ENCODE measurements at regions of chr5 and their contacts with region 1.

Region 1: GRCh38 chr5:96614110-96614691 is 48.0 kb upstream of the CAST start:
- DNase-seq: peak; percentile 74
- H3K4me3 ChIP-seq: no peak overlapping the region; the same call in 1 of the 2 replicates
- CTCF ChIP-seq: peak; percentile 24

Region 2: GRCh38 chr5:96344678-96345577 is 269.3 kb before region 1 on chr5:
- CTCF ChIA-PET with region 1: interaction called, 55 read pairs
- POLR2A ChIA-PET with region 1: no interaction called
- DNase-seq: peak; percentile 51
- H3K4me3 ChIP-seq: no peak overlapping the region
- CTCF ChIP-seq: peak; percentile 51

Region 3: GRCh38 chr5:96626956-96627355 is 12.8 kb after region 1 on chr5:
- CTCF ChIA-PET with region 1: interaction called, 20 read pairs
- POLR2A ChIA-PET with region 1: interaction called, 3 read pairs
- DNase-seq: peak; percentile 74
- H3K4me3 ChIP-seq: no peak overlapping the region
- CTCF ChIP-seq: no peak

Region 4: GRCh38 chr5:96702503-96703383 is 88.5 kb after region 1 on chr5:
- CTCF ChIA-PET with region 1: interaction called, 17 read pairs
- POLR2A ChIA-PET with region 1: no interaction called
- DNase-seq: no peak
- H3K4me3 ChIP-seq: peak overlapping the region; percentile 84
- CTCF ChIP-seq: no peak

Region 5: DNA sequence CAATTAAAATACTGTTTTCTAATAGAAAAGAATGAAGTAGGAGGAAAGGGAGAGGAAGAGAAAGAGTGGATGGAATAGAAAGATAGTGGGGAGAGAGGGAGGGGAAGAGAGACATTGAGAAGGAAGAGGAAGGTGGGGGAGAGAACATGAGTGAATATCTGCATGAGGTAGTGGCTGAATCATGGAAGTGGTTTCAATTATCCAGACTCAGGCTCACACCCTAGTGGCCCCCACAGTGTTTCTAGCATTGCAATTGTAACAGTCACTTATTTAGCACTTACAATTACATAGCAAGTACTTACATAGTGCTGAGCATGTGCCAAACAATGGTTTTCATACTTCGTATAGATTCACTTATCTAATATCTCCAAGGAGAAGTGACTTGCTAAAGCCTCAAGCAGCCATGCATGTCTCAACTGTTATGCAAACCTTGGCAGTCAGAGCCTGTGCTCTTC is 120.7 kb after region 1 on chr5:
- CTCF ChIA-PET with region 1: interaction called, 68 read pairs
- POLR2A ChIA-PET with region 1: interaction called, 3 read pairs
- DNase-seq: peak; percentile 42
- H3K4me3 ChIP-seq: no peak overlapping the region
- CTCF ChIP-seq: no peak

Region 6: GRCh38 chr5:96752341-96753016 is 138.3 kb after region 1 on chr5:
- CTCF ChIA-PET with region 1: interaction called, 12 read pairs
- POLR2A ChIA-PET with region 1: no interaction called
- DNase-seq: no peak
- H3K4me3 ChIP-seq: no peak overlapping the region
- CTCF ChIP-seq: peak; percentile 35

Region 7: DNA sequence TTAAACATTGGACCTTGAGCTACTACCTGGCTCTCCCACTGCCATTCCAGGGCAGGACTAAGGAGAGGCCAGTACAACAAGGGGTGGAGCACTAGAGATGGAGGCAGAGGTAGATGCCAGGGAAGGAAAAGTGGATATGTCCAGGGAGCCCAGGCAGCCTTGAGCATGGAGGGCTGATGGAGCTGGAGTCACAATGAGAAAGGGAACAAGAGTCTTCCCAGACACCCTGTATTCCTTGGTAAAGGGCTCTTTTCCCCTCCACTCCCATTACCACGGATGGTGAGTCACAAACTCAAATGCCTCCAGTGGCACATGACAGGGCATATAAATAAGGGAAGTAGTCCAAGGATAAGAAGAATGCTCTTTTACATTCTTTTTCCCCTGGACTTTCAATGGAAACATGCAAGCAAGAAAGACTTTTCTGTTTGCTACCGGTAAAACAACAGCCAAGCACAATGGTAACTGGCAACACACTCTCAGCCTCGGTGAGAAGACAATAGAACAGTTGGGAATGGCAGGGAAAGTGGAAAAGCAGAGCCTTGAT is 176.8 kb after region 1 on chr5:
- CTCF ChIA-PET with region 1: no interaction called
- POLR2A ChIA-PET with region 1: no interaction called
- DNase-seq: no peak
- H3K4me3 ChIP-seq: no peak overlapping the region
- CTCF ChIP-seq: no peak